Endothelial cell of umbilical vein (primary cell): ENCODE measurements at regions of chr6 and their contacts with region 1.

Region 1: GRCh38 chr6:167543602-167544497 is 219.0 kb downstream of the TTLL2 start:
- DNase-seq: peak; percentile 62
- H3K4me3 ChIP-seq: peak overlapping the region in 1 of 3 experiments; percentile 5
- H3K27ac ChIP-seq: peak overlapping the region; percentile 89
- H3K4me1 ChIP-seq: peaks cover 25% of the 10 kb centered on the region
- H3K27me3 ChIP-seq: no peaks in the 10 kb centered on the region
- CTCF ChIP-seq: no peak
- POLR2A ChIP-seq: no peak

Region 2: DNA sequence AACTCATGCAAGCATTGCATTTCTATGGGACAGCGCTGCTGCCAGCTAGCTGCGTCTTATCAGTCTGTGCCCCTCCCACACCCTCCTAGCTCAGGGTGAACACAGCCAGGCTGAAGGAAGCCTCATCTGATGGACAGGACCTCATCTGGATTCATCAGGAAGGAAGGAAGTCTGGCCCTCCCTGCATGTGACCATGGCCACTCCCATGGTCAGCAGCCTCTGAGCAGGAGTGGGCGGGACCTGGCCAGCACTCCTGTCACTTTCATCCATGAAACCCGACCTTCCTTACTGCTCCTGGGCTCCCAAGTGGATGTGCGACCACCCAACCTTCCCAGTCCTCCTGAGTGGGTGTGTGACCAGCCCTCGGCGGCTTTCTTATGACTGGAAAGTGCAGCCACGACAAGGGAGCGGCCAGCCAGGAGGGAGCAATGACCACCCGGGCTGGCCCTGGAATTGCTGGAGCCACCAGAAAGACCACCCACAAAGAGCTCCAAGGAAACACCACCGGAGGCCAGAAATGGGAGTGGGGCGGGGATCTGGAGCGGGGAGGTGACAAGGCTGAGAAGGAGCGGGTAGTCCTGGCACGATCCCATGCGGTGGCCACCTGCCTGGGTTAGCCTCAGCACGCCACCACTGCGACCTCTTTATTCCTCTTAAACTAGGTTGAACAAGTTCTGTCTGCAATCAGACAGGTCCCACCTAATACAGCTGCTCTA is 22.2 kb after region 1 on chr6:
- CTCF ChIA-PET with region 1: no interaction called
- POLR2A ChIA-PET with region 1: no interaction called
- dilution Hi-C with region 1: no loop called
- intact Hi-C with region 1: loop called (anchors 2 kb)
- DNase-seq: no peak
- H3K4me3 ChIP-seq: no peak overlapping the region
- H3K27ac ChIP-seq: no peak overlapping the region
- H3K4me1 ChIP-seq: peaks cover 6% of the 10 kb centered on the region
- H3K27me3 ChIP-seq: no peaks in the 10 kb centered on the region
- CTCF ChIP-seq: no peak
- POLR2A ChIP-seq: no peak

Region 3: GRCh38 chr6:167669870-167670802 is 126.3 kb after region 1 on chr6:
- CTCF ChIA-PET with region 1: no interaction called
- POLR2A ChIA-PET with region 1: no interaction called
- dilution Hi-C with region 1: no loop called
- intact Hi-C with region 1: no loop called
- DNase-seq: no peak
- H3K4me3 ChIP-seq: no peak overlapping the region
- H3K27ac ChIP-seq: no peak overlapping the region
- H3K4me1 ChIP-seq: no peaks in the 10 kb centered on the region
- H3K27me3 ChIP-seq: no peaks in the 10 kb centered on the region
- CTCF ChIP-seq: no peak
- POLR2A ChIP-seq: no peak

Region 4: DNA sequence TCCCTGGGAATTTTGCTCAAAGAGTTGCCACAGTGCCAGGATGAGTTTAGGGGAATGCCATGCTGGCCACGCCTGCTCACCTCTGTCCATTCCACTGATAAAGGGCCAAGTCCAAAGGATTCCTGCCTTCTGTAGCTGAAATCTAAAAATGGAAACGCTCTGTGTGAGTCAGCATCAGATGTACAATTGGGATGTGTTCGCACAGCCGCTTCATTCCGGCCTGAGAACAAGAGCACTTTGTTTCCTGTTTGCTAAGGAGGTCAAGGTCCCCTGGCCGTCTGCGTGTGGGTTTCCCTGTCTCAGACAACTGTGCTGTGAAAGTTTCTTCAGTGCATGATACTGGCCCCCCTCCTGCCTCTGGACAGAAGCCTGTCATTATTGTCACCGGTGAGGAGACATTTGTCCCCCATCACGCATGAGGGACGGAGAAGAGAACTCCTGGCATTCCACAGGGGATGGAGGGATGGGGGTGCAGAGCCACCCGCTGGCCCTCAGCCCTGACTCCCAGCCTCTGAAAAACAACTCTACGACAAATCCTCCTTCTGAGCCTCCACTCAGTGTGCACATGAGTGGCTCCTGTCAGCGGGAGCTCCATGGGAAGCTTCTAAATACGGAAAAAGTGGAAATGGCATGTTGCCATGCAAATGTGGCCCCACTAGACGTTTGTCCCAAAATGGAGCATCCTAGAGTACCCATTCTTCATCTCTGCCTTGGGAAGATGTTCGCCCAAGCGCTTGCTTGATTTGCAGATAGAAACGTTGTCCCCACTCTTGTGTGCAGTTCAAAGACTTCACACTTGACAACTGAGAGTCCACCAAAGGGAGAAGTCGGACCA is 139.4 kb after region 1 on chr6:
- CTCF ChIA-PET with region 1: no interaction called
- POLR2A ChIA-PET with region 1: no interaction called
- dilution Hi-C with region 1: no loop called
- intact Hi-C with region 1: loop called (anchors 1 kb)
- DNase-seq: peak; percentile 94
- H3K4me3 ChIP-seq: no peak overlapping the region
- H3K27ac ChIP-seq: peak overlapping the region; percentile 76
- H3K4me1 ChIP-seq: peaks cover 24% of the 10 kb centered on the region
- H3K27me3 ChIP-seq: peaks cover 0 to under 1% of the 10 kb centered on the region in 2 experiments
- CTCF ChIP-seq: no peak
- POLR2A ChIP-seq: no peak

Region 5: DNA sequence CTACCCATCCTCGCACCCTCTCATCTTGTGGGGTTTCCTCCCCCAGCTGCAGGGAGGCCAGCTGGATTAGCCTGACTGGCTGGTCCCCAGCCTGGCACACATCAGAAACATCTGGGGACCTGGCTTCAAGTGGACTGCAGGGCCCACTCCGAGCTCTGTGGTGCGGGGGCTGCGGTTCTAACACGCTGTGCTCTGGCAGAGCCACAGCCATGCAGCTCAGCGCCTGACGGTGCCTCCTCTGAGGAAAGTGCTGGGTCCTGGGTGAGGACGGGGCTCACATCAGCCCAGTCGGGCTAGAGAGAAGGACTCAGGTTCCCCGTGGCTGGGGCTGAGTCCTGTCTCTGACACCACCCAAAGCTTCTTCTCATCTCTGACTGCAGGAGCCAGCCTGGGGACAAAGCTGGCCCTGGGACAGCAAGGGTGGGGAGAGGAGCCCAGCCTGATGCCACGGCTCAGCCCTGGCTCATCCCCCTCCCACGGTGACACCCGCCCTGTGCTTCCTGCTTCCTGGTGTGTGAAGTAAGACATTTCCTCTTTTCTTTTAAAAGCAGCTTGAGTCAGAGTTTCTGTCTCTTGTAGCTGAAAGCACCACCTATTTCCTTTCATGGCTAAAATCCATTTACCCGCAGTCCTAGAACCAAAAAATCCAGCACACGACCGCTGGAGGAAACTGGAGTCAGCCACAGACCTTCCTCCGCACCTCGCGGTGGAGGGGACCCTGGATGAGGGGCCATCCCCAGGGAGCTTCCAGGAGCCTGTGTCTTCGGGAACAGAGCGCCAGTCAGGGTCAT is 155.5 kb after region 1 on chr6:
- CTCF ChIA-PET with region 1: no interaction called
- POLR2A ChIA-PET with region 1: no interaction called
- dilution Hi-C with region 1: no loop called
- intact Hi-C with region 1: loop called (anchors 5 kb)
- DNase-seq: peak; percentile 87
- H3K4me3 ChIP-seq: peak overlapping the region in 1 of 3 experiments; percentile 42
- H3K27ac ChIP-seq: peak overlapping the region; percentile 99
- H3K4me1 ChIP-seq: peaks cover 22% of the 10 kb centered on the region
- H3K27me3 ChIP-seq: no peaks in the 10 kb centered on the region
- CTCF ChIP-seq: no peak
- POLR2A ChIP-seq: no peak

Region 6: DNA sequence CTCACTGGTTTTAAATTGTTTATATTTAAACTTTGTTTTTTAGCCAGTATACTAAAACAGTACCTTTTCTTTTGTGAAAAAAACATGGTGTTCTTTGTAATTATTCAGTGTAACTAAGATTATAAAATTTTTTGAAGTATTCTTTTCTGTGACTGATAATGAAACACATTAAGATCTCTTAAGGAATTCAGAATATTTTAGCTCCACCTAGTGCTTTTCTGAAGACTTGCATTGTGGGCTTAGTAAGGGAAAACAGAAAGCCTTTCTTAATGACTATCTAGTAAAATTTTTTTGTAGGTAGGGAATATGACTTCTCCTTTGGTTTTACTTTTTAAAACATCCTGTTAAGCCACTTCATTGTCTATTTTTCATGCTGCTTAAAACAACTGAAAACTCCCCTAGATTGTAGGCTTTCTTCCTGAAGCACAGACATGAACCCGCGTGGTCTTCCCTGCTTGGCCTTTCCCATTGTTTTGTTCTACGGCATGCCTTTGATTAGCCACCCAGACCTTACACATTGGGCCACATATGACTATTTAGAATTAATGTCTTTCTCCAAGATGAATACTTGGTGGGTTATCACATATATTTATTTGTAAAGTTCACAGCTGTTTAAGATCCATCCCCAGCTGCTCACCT is 354.9 kb after region 1 on chr6:
- CTCF ChIA-PET with region 1: no interaction called
- POLR2A ChIA-PET with region 1: no interaction called
- dilution Hi-C with region 1: no loop called
- intact Hi-C with region 1: loop called (anchors 5 kb)
- DNase-seq: peak; percentile 41
- H3K4me3 ChIP-seq: no peak overlapping the region
- H3K27ac ChIP-seq: no peak overlapping the region
- H3K4me1 ChIP-seq: no peaks in the 10 kb centered on the region
- H3K27me3 ChIP-seq: no peaks in the 10 kb centered on the region
- CTCF ChIP-seq: peak; percentile 44 to 52
- POLR2A ChIP-seq: no peak